Activated CD4-positive, alpha-beta memory T cell treated with anti-CD3 and anti-CD28 coated beads for 36 hours (primary cell): ENCODE measurements at regions of chr9 and their contacts with region 1.

Region 1: DNA sequence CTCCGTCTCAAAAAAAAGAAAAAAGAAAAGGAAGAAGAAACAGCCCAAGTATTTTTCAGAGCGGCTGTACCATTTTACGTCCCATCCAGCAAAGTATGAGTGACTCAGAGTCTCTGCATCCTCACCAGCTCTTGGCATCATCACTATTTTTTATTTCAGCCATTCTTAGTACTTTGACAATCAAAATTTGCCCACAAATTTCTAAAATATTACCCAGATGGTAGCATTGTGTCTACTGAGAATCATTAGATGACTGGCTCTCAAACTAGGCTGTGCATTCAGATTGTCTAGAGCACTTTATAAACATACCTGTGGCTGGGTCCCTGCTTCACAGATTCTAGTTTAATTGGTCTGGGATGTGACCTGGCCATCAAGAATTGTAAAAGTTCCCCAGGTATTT is 21.6 kb upstream of the MELK start:
- DNase-seq: no peak
- H3K4me3 Mint-ChIP-seq: no peak overlapping the region
- H3K27ac Mint-ChIP-seq: no peak overlapping the region
- H3K4me1 Mint-ChIP-seq: no peaks in the 10 kb centered on the region
- H3K27me3 Mint-ChIP-seq: peaks cover 4% of the 10 kb centered on the region

Region 2: DNA sequence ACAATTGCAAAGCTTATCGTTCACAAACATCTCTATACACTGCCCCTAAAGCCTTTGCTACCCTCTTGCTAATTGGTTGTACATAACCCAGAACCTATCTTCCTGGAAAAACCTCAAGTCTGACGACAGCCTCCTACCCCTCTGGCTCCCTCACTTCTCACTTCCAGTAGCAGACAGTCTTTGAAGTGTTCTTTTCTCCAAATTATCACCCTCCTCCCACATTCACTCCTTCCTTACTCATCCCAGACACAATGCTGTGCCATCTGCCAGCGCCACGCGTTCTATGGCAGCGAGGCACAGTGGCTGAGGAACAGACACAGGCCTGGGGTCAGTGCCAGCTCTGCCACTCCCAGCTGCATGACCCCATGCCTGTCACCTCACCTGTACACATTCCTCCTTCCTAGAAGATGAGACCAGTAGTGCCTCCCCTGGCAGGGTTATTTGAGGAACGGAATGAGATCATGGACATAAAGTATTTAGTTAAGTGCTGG is 332.7 kb before region 1 on chr9:
- CTCF ChIA-PET with region 1: no interaction called
- POLR2A ChIA-PET with region 1: no interaction called
- intact Hi-C with region 1: no loop called
- DNase-seq: peak; percentile 48
- H3K4me3 Mint-ChIP-seq: no peak overlapping the region
- H3K27ac Mint-ChIP-seq: peak overlapping the region; percentile 77
- H3K4me1 Mint-ChIP-seq: peaks cover 36% of the 10 kb centered on the region
- H3K27me3 Mint-ChIP-seq: no peaks in the 10 kb centered on the region

Region 3: DNA sequence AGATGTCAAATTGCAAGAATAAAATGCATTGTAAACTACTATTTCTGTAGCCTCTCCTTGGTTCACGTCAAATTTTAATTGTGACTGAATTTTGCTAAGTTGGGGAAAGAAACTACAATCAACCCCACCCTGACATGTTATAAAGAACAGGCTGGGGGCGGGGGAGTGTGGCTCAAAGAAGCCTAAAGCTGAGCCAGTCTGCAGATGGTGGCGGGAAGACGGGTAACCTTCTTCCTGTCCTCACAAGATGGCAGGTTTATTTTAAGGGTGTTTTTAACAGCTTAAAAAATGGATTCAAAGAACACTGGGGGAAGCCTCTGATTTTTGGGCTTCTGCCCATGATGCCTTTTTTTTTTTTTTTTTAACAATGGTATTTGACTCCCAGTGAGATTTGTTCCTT is 47.0 kb before region 1 on chr9:
- CTCF ChIA-PET with region 1: interaction called, 4 read pairs
- POLR2A ChIA-PET with region 1: no interaction called
- intact Hi-C with region 1: loop called (anchors 10 kb)
- DNase-seq: peak; percentile 12
- H3K4me3 Mint-ChIP-seq: no peak overlapping the region
- H3K27ac Mint-ChIP-seq: no peak overlapping the region
- H3K4me1 Mint-ChIP-seq: peaks cover 15% of the 10 kb centered on the region
- H3K27me3 Mint-ChIP-seq: no peaks in the 10 kb centered on the region

Region 4: GRCh38 chr9:36748322-36748899 is 197.3 kb after region 1 on chr9:
- CTCF ChIA-PET with region 1: no interaction called
- POLR2A ChIA-PET with region 1: no interaction called
- intact Hi-C with region 1: no loop called
- DNase-seq: peak; percentile 43
- H3K4me3 Mint-ChIP-seq: no peak overlapping the region
- H3K27ac Mint-ChIP-seq: no peak overlapping the region
- H3K4me1 Mint-ChIP-seq: no peaks in the 10 kb centered on the region
- H3K27me3 Mint-ChIP-seq: peaks cover 39% of the 10 kb centered on the region